ENCODE measurements at regions of chrX and their contacts with region 1.

Region 1: GRCh38 chrX:102659790-102660757 is 8.8 kb downstream of the GPRASP1 start:
- DNase-seq: peak; percentile 52
- ATAC-seq: peak; percentile 94
- H3K4me3 ChIP-seq: peak overlapping the region; percentile 47 to 71 (median 57)
- H3K27ac ChIP-seq: peak overlapping the region; percentile 61
- H3K4me1 ChIP-seq: peaks cover 12% of the 10 kb centered on the region
- H3K27me3 ChIP-seq: no peaks in the 10 kb centered on the region; a peak in 1 of 5 replicates
- CTCF ChIP-seq: no peak
- EP300 ChIP-seq: no peak
- POLR2A ChIP-seq: peak; percentile 60 to 63
- RAD21 ChIP-seq: no peak

Region 2: GRCh38 chrX:102580891-102581290 is 79.2 kb before region 1 on chrX:
- CTCF ChIA-PET with region 1: no interaction called
- POLR2A ChIA-PET with region 1: no interaction called
- in situ Hi-C with region 1: no loop called
- intact Hi-C with region 1: no loop called
- DNase-seq: no peak
- ATAC-seq: no peak
- H3K4me3 ChIP-seq: no peak overlapping the region
- H3K27ac ChIP-seq: no peak overlapping the region
- H3K4me1 ChIP-seq: no peaks in the 10 kb centered on the region
- H3K27me3 ChIP-seq: no peaks in the 10 kb centered on the region
- CTCF ChIP-seq: no peak
- EP300 ChIP-seq: no peak
- POLR2A ChIP-seq: no peak
- RAD21 ChIP-seq: no peak

Region 3: DNA sequence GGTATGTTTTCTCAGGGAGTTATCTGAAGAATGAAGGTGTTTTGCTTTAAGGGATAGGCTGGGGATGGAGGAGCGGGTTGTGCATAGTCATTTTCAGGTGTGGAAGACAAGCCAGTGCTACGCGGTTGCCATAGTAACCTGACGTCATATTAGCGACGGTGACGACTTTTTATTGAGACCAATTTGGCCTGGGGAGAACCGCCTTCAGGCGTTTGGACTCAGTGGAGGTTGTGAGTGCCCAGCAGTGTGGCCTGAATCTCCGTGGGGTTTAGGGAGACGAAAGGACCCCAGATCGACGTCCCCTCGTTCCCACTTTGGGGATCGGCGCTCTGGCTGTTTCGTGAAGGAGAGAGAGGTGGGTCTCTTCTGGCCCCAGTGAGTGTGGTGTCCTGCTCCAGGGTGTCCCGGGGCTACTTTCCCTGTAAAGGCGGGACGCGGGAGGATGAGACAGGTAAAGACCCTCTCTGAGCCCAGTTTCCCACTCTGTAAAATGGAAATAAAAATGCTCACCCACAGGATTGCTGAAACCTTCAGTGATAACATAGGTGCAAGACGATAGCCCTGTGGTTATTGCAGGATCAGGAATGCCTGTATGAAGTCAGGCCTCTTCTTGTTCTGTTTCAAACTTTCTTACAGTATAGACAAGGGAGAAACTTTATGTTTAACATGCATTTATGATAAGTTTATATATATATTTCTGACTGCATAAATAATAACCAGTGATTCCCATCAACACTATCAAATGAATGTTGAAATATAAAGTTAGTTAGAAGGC is 109.1 kb after region 1 on chrX:
- CTCF ChIA-PET with region 1: no interaction called
- POLR2A ChIA-PET with region 1: no interaction called
- in situ Hi-C with region 1: no loop called
- intact Hi-C with region 1: loop called (anchors 5 kb)
- DNase-seq: peak; percentile 84
- ATAC-seq: peak; percentile 94
- H3K4me3 ChIP-seq: peak overlapping the region; percentile 62 to 76 (median 69)
- H3K27ac ChIP-seq: peak overlapping the region; percentile 67
- H3K4me1 ChIP-seq: 0 out of 2 replicates have a peak, but pooled peaks cover 6% of the 10 kb centered on the region
- H3K27me3 ChIP-seq: no peaks in the 10 kb centered on the region; a peak in 1 of 5 replicates
- CTCF ChIP-seq: no peak
- EP300 ChIP-seq: no peak
- POLR2A ChIP-seq: peak; percentile 70 to 75
- RAD21 ChIP-seq: no peak